Caco-2 (cell line): ENCODE measurements at regions of chr1 and their contacts with region 1.

Region 1: GRCh38 chr1:150561974-150562445 is 12.8 kb downstream of the ADAMTSL4 start:
- DNase-seq: peak; percentile 92 to 93
- H3K4me3 ChIP-seq: peak overlapping the region; percentile 46
- H3K4me3 Mint-ChIP-seq: peak overlapping the region; percentile 80
- H3K27ac Mint-ChIP-seq: peak overlapping the region; percentile 95
- H3K4me1 ChIP-seq: peaks cover 34% of the 10 kb centered on the region
- H3K4me1 Mint-ChIP-seq: peaks cover 27% of the 10 kb centered on the region
- H3K27me3 ChIP-seq: no peaks in the 10 kb centered on the region
- H3K27me3 Mint-ChIP-seq: no peaks in the 10 kb centered on the region
- CTCF ChIP-seq: no peak

Region 2: DNA sequence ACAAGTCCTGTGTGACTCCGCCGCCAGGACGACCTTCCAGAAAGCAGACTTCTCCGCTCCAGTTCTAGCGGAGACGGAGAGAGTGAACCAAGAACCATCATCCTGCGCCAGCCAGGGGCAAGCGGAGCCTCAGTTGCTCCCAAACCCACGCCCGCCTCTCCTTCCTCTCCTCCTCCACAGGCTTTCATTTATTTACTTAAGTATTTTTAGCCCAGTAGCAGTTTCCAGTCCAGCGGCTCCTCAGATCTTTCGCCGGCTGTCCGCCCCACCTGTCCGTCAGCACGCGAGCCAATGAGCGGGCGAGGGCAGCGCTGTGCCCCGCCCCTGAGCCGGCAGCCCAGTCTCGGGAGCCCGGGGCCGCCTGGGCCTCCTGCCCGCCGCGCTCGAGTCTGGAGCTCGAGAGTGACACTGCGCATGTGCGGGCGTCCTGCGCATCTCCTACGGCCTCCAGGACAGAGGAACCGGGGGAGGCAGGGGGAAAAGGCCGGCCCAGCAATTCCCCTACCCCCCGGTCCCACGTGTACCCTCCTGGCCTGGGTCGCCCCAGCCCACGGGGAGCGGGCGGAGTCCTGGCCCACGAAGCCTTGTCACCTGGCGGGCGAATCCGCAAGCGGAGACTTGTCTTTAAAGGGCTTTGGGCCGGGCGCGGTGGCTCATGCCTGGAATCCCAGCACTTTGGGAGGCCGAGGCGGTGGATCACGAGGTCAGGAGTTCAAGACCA is 46.5 kb before region 1 on chr1 and contains the start of gene FALEC:
- CTCF ChIA-PET with region 1: interaction called, 11 read pairs
- POLR2A ChIA-PET with region 1: interaction called, 3 read pairs
- intact Hi-C with region 1: no loop called
- DNase-seq: peak; percentile 97 to 98
- H3K4me3 ChIP-seq: peak within 1 kb of the TSS; percentile 77
- H3K4me3 Mint-ChIP-seq: peak within 1 kb of the TSS; percentile 88
- H3K27ac Mint-ChIP-seq: peak within 1 kb of the TSS; percentile 86
- H3K4me1 ChIP-seq: peaks cover 7% of the 10 kb centered on the region; the same call in 1 of the 2 replicates
- H3K4me1 Mint-ChIP-seq: peaks cover 9% of the 10 kb centered on the region
- H3K27me3 ChIP-seq: no peaks in the 10 kb centered on the region
- H3K27me3 Mint-ChIP-seq: no peaks in the 10 kb centered on the region
- CTCF ChIP-seq: no peak
- total RNA-seq, gene FALEC: 0.59 and 0.63 TPM in 2 replicates

Region 3: GRCh38 chr1:150548632-150549495 is 13.1 kb before region 1 on chr1 and contains the start of gene ADAMTSL4:
- CTCF ChIA-PET with region 1: interaction called, 8 read pairs
- POLR2A ChIA-PET with region 1: interaction called, 8 read pairs
- intact Hi-C with region 1: loop called (anchors 1 kb)
- DNase-seq: peak; percentile 74 to 85
- H3K4me3 ChIP-seq: peak within 1 kb of the TSS; percentile 82
- H3K4me3 Mint-ChIP-seq: peak within 1 kb of the TSS; percentile 80
- H3K27ac Mint-ChIP-seq: peak within 1 kb of the TSS; percentile 92
- H3K4me1 ChIP-seq: peaks cover 44% of the 10 kb centered on the region
- H3K4me1 Mint-ChIP-seq: peaks cover 22% of the 10 kb centered on the region
- H3K27me3 ChIP-seq: no peaks in the 10 kb centered on the region
- H3K27me3 Mint-ChIP-seq: no peaks in the 10 kb centered on the region
- CTCF ChIP-seq: peak in 1 of 2 experiments; percentile 12
- total RNA-seq, gene ADAMTSL4: 16.1 and 17.6 TPM in 2 replicates

Region 4: GRCh38 chr1:150596095-150596892 is 34.3 kb after region 1 on chr1:
- CTCF ChIA-PET with region 1: no interaction called
- POLR2A ChIA-PET with region 1: no interaction called
- intact Hi-C with region 1: no loop called
- DNase-seq: no peak
- H3K4me3 ChIP-seq: no peak overlapping the region
- H3K4me3 Mint-ChIP-seq: no peak overlapping the region
- H3K27ac Mint-ChIP-seq: no peak overlapping the region
- H3K4me1 ChIP-seq: no peaks in the 10 kb centered on the region
- H3K4me1 Mint-ChIP-seq: peaks cover 14% of the 10 kb centered on the region
- H3K27me3 ChIP-seq: no peaks in the 10 kb centered on the region
- H3K27me3 Mint-ChIP-seq: no peaks in the 10 kb centered on the region
- CTCF ChIP-seq: no peak

Region 5: DNA sequence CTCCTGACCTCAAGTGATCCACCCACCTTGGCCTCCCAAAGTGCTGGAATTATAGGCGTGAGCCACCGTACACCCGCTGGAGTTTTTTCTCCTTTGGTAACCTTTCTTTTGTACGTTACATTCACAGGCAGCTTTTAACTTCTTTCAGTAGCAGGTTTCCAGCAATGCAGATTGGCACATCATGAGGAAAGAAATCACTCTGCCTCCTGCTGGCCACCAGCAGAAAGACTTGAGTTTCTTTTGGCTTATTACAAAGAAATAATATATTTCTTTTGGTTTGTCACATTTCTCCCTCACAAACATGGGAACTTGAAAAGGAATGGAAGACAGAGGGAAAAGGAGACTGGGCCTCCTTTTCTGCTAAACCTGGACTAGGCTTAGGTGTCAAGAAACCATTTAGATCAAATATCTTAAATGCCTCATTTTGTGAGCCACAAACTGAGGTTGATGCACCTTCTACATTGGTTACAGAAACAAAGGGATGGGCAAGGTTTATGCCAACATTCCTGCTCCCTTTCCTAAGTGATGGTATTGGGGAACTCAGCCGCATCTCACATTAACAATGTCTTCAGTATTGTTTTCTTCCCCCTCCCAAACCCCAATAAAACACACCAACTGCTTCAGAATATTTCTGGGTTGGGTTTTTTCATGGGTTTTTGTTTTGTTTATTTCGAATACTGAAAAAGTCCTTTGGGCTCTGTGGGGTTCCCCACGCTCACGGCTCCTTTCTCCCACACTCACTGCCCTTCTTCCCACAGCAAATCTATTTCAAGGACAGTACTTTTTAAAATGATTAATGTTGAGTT is 59.7 kb after region 1 on chr1:
- CTCF ChIA-PET with region 1: interaction called, 15 read pairs
- POLR2A ChIA-PET with region 1: interaction called, 3 read pairs
- intact Hi-C with region 1: loop called (anchors 1 kb)
- DNase-seq: peak in 1 of 2 experiments; percentile 52
- H3K4me3 ChIP-seq: no peak overlapping the region
- H3K4me3 Mint-ChIP-seq: no peak overlapping the region
- H3K27ac Mint-ChIP-seq: no peak overlapping the region
- H3K4me1 ChIP-seq: 0 out of 2 replicates have a peak, but pooled peaks cover 4% of the 10 kb centered on the region
- H3K4me1 Mint-ChIP-seq: peaks cover 21% of the 10 kb centered on the region
- H3K27me3 ChIP-seq: no peaks in the 10 kb centered on the region
- H3K27me3 Mint-ChIP-seq: no peaks in the 10 kb centered on the region
- CTCF ChIP-seq: peak; percentile 63 to 68

Region 6: DNA sequence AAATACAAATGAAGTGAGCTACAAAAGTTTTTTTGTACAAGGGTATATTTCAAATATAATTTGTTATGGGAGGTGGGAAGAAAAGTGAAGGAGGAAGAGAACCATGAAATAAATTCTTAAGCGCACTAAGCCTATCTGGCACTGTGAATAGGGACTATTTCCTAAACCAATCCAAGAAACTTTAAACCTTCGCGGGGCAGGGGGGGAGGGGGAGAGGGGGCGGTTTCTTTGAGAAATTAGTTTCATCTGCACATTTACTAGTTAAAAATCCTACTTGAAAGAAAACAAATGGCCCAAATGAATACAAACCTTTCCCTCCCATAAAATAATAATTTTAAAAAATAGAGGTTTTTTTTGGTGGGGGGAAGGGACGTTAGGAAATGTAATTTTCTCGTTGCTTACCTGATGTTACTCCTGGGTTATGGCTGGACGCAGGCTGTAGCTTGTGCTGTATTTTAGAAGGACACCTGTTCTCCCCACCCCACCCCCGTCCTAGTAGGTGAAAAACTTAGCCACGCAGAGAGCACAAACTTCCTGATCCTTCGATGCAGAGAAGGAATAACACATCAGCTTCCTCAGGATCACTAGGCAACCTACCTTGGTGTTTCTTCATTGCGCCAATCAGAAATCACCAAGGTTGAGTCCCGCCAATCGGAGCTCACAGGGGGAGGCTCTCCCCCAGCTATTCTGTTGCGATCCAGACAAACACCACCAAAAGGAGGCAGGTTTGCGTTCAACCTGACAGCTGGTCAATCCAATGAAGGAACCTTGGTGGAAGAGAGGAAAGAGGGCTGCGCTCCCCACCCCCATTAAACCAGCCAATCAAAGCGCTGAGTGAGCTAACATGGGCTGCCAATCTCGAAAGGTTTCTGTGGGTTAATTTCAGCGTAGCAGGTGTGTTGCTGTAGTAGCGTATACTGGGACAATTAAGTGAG is 134.8 kb after region 1 on chr1 and contains the start of gene GOLPH3L:
- CTCF ChIA-PET with region 1: interaction called, 6 read pairs
- POLR2A ChIA-PET with region 1: interaction called, 12 read pairs
- intact Hi-C with region 1: loop called (anchors 5 kb)
- DNase-seq: peak; percentile 96 to 98
- H3K4me3 ChIP-seq: peak within 1 kb of the TSS; percentile 65
- H3K4me3 Mint-ChIP-seq: peak within 1 kb of the TSS; percentile 98
- H3K27ac Mint-ChIP-seq: peak within 1 kb of the TSS; percentile 97
- H3K4me1 ChIP-seq: no peaks in the 10 kb centered on the region; the same call in 1 of the 2 replicates
- H3K4me1 Mint-ChIP-seq: peaks cover 7% of the 10 kb centered on the region
- H3K27me3 ChIP-seq: no peaks in the 10 kb centered on the region
- H3K27me3 Mint-ChIP-seq: no peaks in the 10 kb centered on the region
- CTCF ChIP-seq: no peak
- total RNA-seq, gene GOLPH3L: 13.3 and 14.7 TPM in 2 replicates

Region 7: DNA sequence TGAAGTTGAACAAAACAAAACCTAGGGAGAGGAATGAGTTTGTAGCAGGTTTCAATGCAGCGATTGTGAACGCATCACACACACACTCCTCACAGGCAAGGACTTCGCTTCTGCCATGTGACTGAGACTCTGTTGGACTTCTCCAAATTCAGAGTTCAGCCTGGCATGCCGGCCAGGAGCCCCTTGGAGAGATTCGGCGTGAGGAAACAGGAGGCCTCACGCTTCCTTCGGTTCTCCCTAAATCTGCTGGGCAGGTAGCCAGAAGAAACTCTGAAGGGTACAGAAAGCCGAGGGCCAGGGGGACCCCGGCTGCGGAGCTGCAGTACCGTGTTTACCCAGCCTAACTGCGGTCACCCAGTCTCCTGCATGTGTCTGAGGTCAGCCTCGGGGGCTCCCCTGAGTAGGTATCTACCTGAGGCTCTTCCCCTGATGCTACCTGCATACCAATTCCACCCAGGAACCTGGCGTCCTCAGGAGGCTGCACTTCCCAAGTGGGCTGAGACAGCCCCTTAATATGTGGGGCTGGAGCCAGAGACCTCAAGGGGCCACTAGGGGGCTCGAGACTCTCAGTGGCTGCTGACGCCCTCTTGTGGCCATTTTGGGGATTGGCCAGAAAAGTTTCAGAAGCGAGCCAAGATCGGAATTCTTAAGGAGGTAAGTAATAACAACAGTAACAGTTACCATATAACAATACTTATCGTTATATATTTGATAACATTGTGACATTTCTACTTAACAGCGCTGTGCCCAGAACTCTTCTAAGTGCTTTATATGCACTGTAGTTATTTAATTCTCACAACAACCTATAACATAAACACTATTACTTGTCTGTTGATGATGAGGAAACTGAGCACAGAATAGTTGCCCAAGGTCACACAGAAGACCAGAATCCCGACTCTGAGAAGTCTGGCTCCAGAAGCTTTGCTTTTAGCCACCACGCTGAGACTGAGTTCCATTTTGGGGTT is 417.4 kb after region 1 on chr1:
- CTCF ChIA-PET with region 1: no interaction called
- POLR2A ChIA-PET with region 1: no interaction called
- intact Hi-C with region 1: loop called (anchors 10 kb)
- DNase-seq: peak; percentile 86 to 90
- H3K4me3 ChIP-seq: no peak overlapping the region
- H3K4me3 Mint-ChIP-seq: no peak overlapping the region
- H3K27ac Mint-ChIP-seq: peak overlapping the region; percentile 19
- H3K4me1 ChIP-seq: peaks cover 86% of the 10 kb centered on the region
- H3K4me1 Mint-ChIP-seq: peaks cover 36% of the 10 kb centered on the region
- H3K27me3 ChIP-seq: no peaks in the 10 kb centered on the region
- H3K27me3 Mint-ChIP-seq: no peaks in the 10 kb centered on the region
- CTCF ChIP-seq: peak; percentile 100